ENCODE measurements at regions of chr3 and their contacts with region 1.

Region 1: GRCh38 chr3:58188173-58188564 is 22.6 kb downstream of the DNASE1L3 start:
- DNase-seq: no peak
- H3K4me3 ChIP-seq: no peak overlapping the region
- CTCF ChIP-seq: no peak

Region 2: GRCh38 chr3:58167431-58168351 is 20.5 kb before region 1 on chr3:
- CTCF ChIA-PET with region 1: interaction called, 143 read pairs
- POLR2A ChIA-PET with region 1: no interaction called
- DNase-seq: no peak
- H3K4me3 ChIP-seq: no peak overlapping the region
- CTCF ChIP-seq: peak; percentile 90

Region 3: DNA sequence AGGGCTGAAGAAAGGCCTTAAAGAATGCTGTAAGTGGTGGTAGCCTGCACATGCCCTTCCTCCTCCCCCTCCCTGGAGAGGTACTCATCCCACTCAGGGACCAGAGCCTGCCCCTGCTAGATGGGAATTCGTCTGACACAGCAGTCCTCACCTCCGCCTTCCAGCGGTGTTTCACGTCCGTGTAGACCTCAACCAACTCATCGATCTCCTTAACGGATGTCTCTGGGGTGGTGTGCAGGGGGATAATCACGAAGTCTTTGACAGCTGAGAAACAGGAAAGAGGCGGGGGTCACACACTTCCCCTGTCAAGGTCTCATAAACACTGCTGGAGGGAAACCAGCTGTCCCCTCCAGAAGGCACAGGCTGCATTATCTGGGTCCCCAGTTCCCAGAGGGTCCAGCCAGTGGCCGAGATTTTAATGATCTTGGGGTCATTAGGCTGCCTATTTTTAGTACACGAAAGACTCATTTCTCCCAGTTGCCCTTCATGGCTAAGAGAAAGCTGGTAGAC is 12.7 kb after region 1 on chr3:
- CTCF ChIA-PET with region 1: interaction called, 25 read pairs
- POLR2A ChIA-PET with region 1: no interaction called
- DNase-seq: no peak
- H3K4me3 ChIP-seq: no peak overlapping the region
- CTCF ChIP-seq: no peak

Region 4: DNA sequence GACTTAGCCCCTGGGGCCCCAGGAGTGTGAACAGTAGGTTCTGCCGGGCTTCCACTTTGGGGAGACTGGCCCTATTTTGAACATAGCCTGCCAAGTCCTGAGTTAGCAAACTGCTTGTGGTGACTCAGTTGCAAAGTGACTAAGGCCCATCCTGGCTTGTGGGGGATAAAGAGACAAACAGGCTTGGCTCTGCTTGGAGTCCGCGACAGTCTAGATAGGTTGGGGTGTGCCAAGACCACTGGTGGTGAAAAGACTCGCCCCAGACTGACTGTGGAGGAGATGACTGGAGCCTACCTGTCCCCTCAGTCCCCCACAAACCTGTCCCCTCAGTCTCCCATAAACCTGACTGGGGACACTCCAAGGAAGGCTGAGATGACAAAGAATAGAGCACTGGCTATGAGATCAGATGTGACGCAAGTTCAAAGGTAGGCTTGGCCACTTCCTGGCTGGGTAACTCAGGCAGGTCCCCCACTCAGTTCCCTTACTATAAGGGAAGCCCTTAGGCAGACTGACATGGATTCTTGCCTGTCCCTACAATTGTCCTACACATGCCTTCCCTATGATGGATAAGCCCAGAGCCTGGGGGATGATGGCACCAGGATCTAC is 18.3 kb after region 1 on chr3:
- CTCF ChIA-PET with region 1: interaction called, 196 read pairs
- POLR2A ChIA-PET with region 1: no interaction called
- DNase-seq: no peak
- H3K4me3 ChIP-seq: no peak overlapping the region
- CTCF ChIP-seq: no peak

Region 5: DNA sequence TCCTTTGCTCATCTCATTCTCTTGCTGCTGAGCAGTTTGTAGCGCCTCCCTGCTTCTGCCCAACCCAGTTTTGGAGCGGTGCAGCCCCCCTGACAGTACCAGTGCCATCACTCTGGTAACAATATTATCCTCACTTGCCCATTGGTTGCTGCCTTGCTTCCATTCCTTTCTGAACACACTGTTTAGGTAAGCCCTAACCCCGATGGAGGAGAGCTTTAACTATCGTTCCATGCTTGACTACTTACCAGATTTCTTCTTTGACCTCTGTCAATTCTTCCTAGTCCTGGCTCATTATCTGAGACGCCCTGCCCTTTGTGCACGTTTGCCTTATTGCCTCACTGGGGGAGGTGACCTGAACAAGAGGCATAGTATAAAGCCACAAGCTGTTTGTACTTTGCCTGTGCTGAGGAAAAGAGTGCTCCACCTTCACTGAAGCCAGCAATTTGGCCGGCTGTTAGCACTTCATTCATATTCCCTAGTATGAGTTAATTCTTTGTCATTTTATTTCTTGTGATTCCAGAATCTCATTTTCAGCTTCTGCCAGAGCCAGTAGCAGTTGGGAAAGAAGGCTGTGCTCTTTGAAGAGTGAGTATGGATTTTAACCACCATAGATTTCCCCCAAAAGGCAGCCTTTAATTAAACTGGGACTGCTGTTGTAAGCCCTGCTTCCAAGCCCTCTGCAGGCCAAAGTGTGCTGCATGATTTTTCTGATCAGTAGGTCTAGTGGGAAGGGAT is 61.4 kb after region 1 on chr3:
- CTCF ChIA-PET with region 1: interaction called, 14 read pairs
- POLR2A ChIA-PET with region 1: no interaction called
- DNase-seq: no peak
- H3K4me3 ChIP-seq: no peak overlapping the region
- CTCF ChIP-seq: no peak

Measured in AG04449 (cell line).